ENCODE measurements at regions of chr3 and their contacts with region 1.

Region 1: DNA sequence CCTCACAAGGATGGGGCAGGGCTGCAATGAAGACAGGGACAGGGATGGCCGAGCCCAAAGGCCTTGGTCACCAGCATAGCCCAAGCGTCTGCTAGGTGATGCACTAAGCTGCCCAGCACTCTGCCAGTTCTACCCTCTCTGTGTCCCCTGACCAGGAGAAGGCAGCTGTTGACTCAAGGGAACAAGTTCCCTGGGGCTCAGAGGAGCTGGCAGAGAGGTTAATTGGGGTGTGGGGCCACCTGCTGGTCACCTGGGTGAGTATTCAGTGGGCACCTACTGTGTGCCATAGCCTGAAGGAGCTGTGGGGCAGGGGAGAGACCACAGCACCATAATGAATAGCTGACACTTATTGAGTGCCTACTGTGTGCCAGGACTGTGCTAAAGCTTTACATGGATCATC is 22.0 kb upstream of the DOCK3 start:
- DNase-seq: peak in 4 of 5 donors; percentile 32 to 71 (median 42)
- H3K4me3 ChIP-seq: no peak overlapping the region
- H3K4me3 Mint-ChIP-seq: no peak overlapping the region
- H3K27ac ChIP-seq: no peak overlapping the region
- H3K27ac Mint-ChIP-seq: peak overlapping the region in 2 of 8 donors; percentile 47 to 49
- H3K4me1 ChIP-seq: peaks cover 3% of the 10 kb centered on the region
- H3K4me1 Mint-ChIP-seq: peaks cover 0 to 3% (median 0%) of the 10 kb centered on the region in 3 donors
- H3K27me3 ChIP-seq: no peaks in the 10 kb centered on the region
- H3K27me3 Mint-ChIP-seq: no peaks in the 10 kb centered on the region

Region 2: GRCh38 chr3:50639055-50639494 is 13.6 kb before region 1 on chr3:
- CTCF ChIA-PET with region 1: interaction called, 13 read pairs
- POLR2A ChIA-PET with region 1: no interaction called
- DNase-seq: no peak
- H3K4me3 ChIP-seq: no peak overlapping the region
- H3K4me3 Mint-ChIP-seq: no peak overlapping the region
- H3K27ac ChIP-seq: no peak overlapping the region
- H3K27ac Mint-ChIP-seq: peak overlapping the region in 6 of 8 donors; percentile 38 to 87 (median 68)
- H3K4me1 ChIP-seq: peaks cover 25% of the 10 kb centered on the region
- H3K4me1 Mint-ChIP-seq: peaks cover 26 to 40% (median 28%) of the 10 kb centered on the region in 3 donors
- H3K27me3 ChIP-seq: no peaks in the 10 kb centered on the region
- H3K27me3 Mint-ChIP-seq: no peaks in the 10 kb centered on the region

Region 3: DNA sequence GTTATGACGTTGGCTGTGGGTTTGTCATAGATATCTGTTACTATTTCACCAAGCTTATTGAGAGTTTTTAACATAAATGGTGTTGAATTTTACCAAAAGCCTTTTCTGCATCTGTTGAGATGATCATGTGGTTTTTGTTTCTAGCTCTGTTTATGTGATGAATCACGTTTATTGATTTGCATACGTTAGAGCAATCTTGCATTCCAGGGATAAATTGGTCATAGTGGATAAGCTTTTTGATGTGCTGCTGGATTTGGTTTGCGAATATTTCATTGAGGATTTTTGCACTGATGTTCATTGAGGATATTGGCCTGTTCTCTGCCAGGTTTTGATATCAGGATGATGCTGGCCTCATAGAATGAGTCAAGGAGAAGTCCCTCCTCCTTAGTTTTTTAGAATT is 139.9 kb after region 1 on chr3:
- CTCF ChIA-PET with region 1: no interaction called
- POLR2A ChIA-PET with region 1: no interaction called
- DNase-seq: no peak
- H3K4me3 ChIP-seq: no peak overlapping the region
- H3K4me3 Mint-ChIP-seq: no peak overlapping the region
- H3K27ac ChIP-seq: no peak overlapping the region
- H3K27ac Mint-ChIP-seq: peak overlapping the region in 1 of 8 donors; percentile 1
- H3K4me1 ChIP-seq: no peaks in the 10 kb centered on the region
- H3K4me1 Mint-ChIP-seq: no peaks in the 10 kb centered on the region
- H3K27me3 ChIP-seq: no peaks in the 10 kb centered on the region
- H3K27me3 Mint-ChIP-seq: peaks cover 12 to 35% of the 10 kb centered on the region in 2 donors